CD14-positive monocyte (primary cell): ENCODE measurements at regions of chr2 and their contacts with region 1.

Region 1: DNA sequence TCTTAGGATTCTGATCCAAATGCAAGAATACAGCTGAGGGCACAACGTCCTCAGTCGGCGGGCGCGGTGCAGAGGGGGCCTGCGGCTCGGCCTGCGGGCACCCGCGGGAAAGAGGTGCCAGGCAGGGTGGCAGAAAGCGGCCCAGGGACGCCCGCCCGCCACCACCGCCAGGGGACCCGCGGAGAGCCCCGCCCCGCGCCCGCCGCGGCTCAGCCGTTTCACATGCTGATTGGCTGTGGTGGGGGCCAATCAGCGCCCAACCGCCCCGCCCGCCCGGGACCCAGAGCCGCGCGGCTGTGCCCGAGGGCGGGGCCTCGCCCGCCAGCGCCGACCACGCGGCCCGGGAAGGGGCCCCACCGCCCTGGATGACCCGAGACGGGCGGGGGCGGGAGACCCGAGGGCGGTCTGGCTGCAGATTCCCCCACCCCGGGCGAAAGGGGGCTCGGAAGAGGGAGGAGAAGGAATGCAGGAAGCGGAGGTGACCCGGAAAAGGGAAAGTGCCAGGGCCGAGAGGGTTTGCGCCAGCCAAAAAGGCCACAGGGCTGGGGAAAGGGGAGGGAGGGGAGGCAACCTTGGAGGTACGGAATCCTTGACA is 8.0 kb downstream of the IRS1 start:
- DNase-seq: peak; percentile 73 to 82 (median 80)
- H3K4me3 ChIP-seq: peak overlapping the region; percentile 57 to 77 (median 73)
- H3K4me3 Mint-ChIP-seq: peak overlapping the region; percentile 84 to 91
- H3K27ac ChIP-seq: peak overlapping the region; percentile 64 to 87
- H3K27ac Mint-ChIP-seq: peak overlapping the region; percentile 76 to 94 (median 91)
- H3K4me1 ChIP-seq: peaks cover 14 to 21% of the 10 kb centered on the region in 2 donors
- H3K4me1 Mint-ChIP-seq: peaks cover 16% of the 10 kb centered on the region
- H3K27me3 ChIP-seq: peaks cover 7% of the 10 kb centered on the region in 2 donors
- H3K27me3 Mint-ChIP-seq: peaks cover 14 to 22% (median 18%) of the 10 kb centered on the region in 3 donors
- CTCF ChIP-seq: peak; percentile 38

Region 2: GRCh38 chr2:226118471-226119430 is 672.8 kb before region 1 on chr2:
- intact Hi-C with region 1: loop called in 1 of 2 experiments (anchors 5 kb)
- DNase-seq: peak; percentile 88 to 95 (median 95)
- H3K4me3 ChIP-seq: peak overlapping the region; percentile 45 to 88 (median 68)
- H3K4me3 Mint-ChIP-seq: peak overlapping the region; percentile 70 to 93
- H3K27ac ChIP-seq: peak overlapping the region; percentile 95 to 97
- H3K27ac Mint-ChIP-seq: peak overlapping the region; percentile 97 to 100 (median 99)
- H3K4me1 ChIP-seq: peaks cover 54 to 68% of the 10 kb centered on the region in 2 donors
- H3K4me1 Mint-ChIP-seq: peaks cover 59% of the 10 kb centered on the region
- H3K27me3 ChIP-seq: no peaks in the 10 kb centered on the region
- H3K27me3 Mint-ChIP-seq: no peaks in the 10 kb centered on the region
- CTCF ChIP-seq: no peak